Left colon (tissue), 2 donors: ENCODE measurements at regions of chr3 and their contacts with region 1.

Region 1: GRCh38 chr3:169966428-169966950 is at the start of gene SEC62:
- DNase-seq: peak; percentile 92 to 96
- ATAC-seq: peak; percentile 97
- total RNA-seq, gene SEC62: 80.8 to 87.0 TPM

Region 2: GRCh38 chr3:169764452-169765274 is 201.8 kb before region 1 on chr3 and contains the start of gene TERC:
- intact Hi-C with region 1: loop called in 1 of 2 experiments (anchors 5 kb)
- DNase-seq: peak; percentile 93 to 95
- ATAC-seq: peak; percentile 86
- total RNA-seq, gene TERC: 4.8 TPM in 1 of 2 donors, not detected in the other

Region 3: DNA sequence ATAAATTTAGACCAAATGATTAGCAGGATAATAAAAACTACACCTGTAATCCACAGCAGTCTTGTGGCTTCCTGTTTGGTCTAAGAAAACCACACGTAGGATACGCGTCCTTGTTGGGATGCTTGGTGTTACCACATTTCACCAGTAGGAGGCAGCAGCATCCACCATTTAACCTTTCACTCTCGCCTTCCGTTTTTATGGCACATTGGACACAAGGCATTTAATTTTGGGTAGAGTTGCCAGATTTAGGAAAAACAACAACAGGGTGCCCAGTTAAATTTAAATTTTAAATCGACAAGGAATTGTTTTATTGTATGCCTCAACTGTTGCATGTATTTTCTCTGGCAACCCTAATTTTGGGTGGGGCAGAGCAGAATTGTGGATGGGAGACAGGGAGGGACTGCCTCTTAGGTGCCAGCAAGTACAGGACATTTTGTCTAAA is 103.0 kb before region 1 on chr3:
- intact Hi-C with region 1: loop called in 1 of 2 experiments (anchors 10 kb)
- DNase-seq: peak; percentile 54 to 77
- ATAC-seq: peak; percentile 74